ENCODE measurements at regions of chr6 and their contacts with region 1.

Region 1: GRCh38 chr6:26270903-26271667 is 93.9 kb upstream of the BTN3A2 start:
- DNase-seq: peak; percentile 86 to 88
- H3K4me3 ChIP-seq: peak overlapping the region; percentile 50
- H3K4me3 Mint-ChIP-seq: no peak overlapping the region
- H3K27ac Mint-ChIP-seq: no peak overlapping the region
- H3K4me1 ChIP-seq: peaks cover 19% of the 10 kb centered on the region
- H3K4me1 Mint-ChIP-seq: peaks cover 19% of the 10 kb centered on the region
- H3K27me3 ChIP-seq: no peaks in the 10 kb centered on the region
- H3K27me3 Mint-ChIP-seq: no peaks in the 10 kb centered on the region
- CTCF ChIP-seq: no peak

Region 2: GRCh38 chr6:26025894-26026832 is 244.9 kb before region 1 on chr6:
- CTCF ChIA-PET with region 1: no interaction called
- POLR2A ChIA-PET with region 1: interaction called, 9 read pairs
- intact Hi-C with region 1: loop called (anchors 5 kb)
- DNase-seq: peak; percentile 94 to 95
- H3K4me3 ChIP-seq: peak overlapping the region; percentile 74
- H3K4me3 Mint-ChIP-seq: peak overlapping the region; percentile 85
- H3K27ac Mint-ChIP-seq: peak overlapping the region; percentile 100
- H3K4me1 ChIP-seq: peaks cover 18% of the 10 kb centered on the region; the same call in 1 of the 2 replicates
- H3K4me1 Mint-ChIP-seq: peaks cover 35% of the 10 kb centered on the region
- H3K27me3 ChIP-seq: no peaks in the 10 kb centered on the region
- H3K27me3 Mint-ChIP-seq: peaks cover 4% of the 10 kb centered on the region
- CTCF ChIP-seq: peak; percentile 81 to 87

Region 3: DNA sequence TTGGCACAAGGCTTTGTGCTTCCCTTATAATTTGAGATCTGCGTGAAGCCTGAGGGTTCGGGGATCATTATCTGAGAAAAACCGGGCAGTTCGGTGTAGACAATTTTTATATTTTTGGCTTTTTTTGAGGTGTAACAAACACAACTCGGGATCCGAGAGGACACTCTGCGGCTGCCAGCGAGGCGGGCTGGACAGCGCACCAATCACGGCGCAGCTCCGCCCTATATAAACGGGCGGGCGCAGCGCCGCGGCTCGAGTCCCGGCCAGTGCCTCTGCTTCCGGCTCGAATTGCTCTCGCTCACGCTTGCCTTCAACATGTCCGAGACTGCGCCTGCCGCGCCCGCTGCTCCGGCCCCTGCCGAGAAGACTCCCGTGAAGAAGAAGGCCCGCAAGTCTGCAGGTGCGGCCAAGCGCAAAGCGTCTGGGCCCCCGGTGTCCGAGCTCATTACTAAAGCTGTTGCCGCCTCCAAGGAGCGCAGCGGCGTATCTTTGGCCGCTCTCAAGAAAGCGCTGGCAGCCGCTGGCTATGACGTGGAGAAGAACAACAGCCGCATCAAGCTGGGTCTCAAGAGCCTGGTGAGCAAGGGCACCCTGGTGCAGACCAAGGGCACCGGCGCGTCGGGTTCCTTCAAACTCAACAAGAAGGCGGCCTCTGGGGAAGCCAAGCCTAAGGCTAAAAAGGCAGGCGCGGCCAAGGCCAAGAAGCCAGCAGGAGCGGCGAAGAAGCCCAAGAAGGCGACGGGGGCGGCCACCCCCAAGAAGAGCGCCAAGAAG is 114.8 kb before region 1 on chr6:
- CTCF ChIA-PET with region 1: no interaction called
- POLR2A ChIA-PET with region 1: interaction called, 11 read pairs
- intact Hi-C with region 1: no loop called
- DNase-seq: peak; percentile 86 to 93
- H3K4me3 ChIP-seq: peak overlapping the region; percentile 64
- H3K4me3 Mint-ChIP-seq: peak overlapping the region; percentile 86
- H3K27ac Mint-ChIP-seq: peak overlapping the region; percentile 98
- H3K4me1 ChIP-seq: peaks cover 10% of the 10 kb centered on the region
- H3K4me1 Mint-ChIP-seq: peaks cover 45% of the 10 kb centered on the region
- H3K27me3 ChIP-seq: no peaks in the 10 kb centered on the region
- H3K27me3 Mint-ChIP-seq: peaks cover 15% of the 10 kb centered on the region
- CTCF ChIP-seq: no peak

Region 4: DNA sequence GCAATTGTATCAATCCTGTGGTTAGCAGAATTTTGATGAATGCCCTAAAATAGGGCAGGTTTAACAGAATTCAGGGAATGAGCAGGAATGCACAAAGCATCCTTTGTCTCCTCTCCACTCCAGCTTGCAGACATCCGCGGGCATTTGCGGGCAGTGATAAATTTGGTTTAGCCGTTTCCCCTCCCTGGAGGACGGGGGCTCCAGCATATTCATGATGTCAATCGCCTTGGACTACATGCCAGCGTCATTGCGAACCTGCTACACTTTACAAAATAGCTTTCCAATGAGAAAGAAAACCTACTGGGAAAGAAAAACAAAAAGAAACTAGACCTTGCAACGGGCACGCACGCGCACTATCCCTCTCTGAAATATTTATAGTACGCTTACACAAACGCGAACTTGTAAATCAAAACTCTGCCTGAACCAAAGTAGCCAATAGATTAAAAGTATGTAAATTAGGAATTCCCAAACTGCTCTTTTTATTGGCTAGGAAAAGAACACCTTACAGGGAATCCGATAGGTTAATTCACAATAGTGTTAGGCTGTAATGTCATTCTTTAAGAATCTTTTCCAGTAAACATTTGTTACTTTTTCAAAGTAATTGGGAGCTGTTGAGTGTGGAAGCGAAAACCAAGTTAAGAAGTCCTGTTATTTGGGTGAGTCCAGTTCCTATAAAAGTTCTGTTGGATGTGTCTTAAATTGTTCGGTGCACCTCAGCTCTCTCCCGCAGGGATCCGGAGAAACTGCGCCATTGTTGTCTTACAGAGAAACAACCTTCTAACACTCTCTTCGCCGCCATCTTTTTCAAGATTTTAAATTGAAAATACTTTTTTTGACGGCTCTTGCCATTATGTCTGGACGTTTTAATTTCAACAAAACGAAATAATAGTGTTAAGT is 47.2 kb before region 1 on chr6:
- CTCF ChIA-PET with region 1: no interaction called
- POLR2A ChIA-PET with region 1: interaction called, 17 read pairs
- intact Hi-C with region 1: no loop called
- DNase-seq: peak; percentile 63 to 69
- H3K4me3 ChIP-seq: peak overlapping the region; percentile 55
- H3K4me3 Mint-ChIP-seq: no peak overlapping the region
- H3K27ac Mint-ChIP-seq: no peak overlapping the region
- H3K4me1 ChIP-seq: 0 out of 2 replicates have a peak, but pooled peaks cover 8% of the 10 kb centered on the region
- H3K4me1 Mint-ChIP-seq: no peaks in the 10 kb centered on the region
- H3K27me3 ChIP-seq: no peaks in the 10 kb centered on the region
- H3K27me3 Mint-ChIP-seq: no peaks in the 10 kb centered on the region
- CTCF ChIP-seq: no peak

Region 5: GRCh38 chr6:26249957-26250697 is 21.0 kb before region 1 on chr6:
- CTCF ChIA-PET with region 1: interaction called, 7 read pairs
- POLR2A ChIA-PET with region 1: interaction called, 166 read pairs
- intact Hi-C with region 1: loop called (anchors 1 kb)
- DNase-seq: peak; percentile 81 to 84
- H3K4me3 ChIP-seq: peak overlapping the region; percentile 97
- H3K4me3 Mint-ChIP-seq: peak overlapping the region; percentile 71
- H3K27ac Mint-ChIP-seq: peak overlapping the region; percentile 71
- H3K4me1 ChIP-seq: peaks cover 10% of the 10 kb centered on the region; the same call in 1 of the 2 replicates
- H3K4me1 Mint-ChIP-seq: peaks cover 13% of the 10 kb centered on the region
- H3K27me3 ChIP-seq: no peaks in the 10 kb centered on the region
- H3K27me3 Mint-ChIP-seq: peaks cover 3% of the 10 kb centered on the region
- CTCF ChIP-seq: peak in 1 of 2 experiments; percentile 42

Region 6: DNA sequence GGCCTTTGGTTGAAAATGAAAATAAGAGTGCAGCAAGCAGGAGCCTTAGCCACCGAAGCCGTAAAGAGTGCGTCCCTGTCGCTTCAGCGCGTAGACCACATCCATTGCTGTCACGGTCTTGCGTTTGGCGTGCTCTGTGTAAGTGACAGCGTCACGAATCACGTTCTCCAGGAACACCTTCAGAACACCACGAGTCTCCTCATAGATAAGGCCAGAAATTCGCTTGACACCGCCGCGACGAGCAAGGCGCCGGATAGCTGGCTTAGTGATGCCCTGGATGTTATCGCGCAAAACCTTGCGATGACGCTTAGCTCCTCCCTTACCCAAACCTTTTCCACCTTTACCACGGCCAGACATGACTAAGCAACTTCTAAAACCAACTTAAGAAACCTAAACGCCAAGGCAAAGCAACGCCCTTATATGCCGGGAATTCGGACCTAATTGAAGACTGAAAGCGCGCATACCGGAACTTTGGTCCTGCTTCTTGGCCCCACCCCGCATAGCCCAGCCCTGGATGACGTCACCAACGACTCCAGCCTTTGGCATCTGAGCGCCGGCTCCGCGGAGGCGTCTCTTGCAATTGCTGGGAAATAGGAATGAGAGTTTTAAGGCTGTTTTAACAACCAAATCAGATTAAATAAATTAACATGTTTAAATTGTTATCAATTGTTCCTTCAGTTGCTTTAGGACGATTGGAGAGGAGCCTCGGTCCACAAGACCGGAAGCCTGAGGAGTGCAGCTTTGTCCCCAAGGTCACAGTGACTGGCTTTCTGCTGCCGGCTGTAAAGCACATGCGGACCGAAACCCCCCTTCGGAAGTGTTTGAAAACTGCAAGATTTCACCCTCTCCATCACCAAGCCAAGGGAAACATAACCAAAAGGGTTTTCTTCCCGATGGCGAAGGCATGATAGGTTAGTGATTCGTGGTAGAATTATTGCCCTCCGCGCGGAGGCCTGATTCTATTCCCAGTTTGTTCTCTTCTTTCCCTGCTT is 14.4 kb after region 1 on chr6:
- CTCF ChIA-PET with region 1: no interaction called
- POLR2A ChIA-PET with region 1: interaction called, 69 read pairs
- intact Hi-C with region 1: loop called (anchors 1 kb)
- DNase-seq: peak; percentile 97 to 99
- H3K4me3 ChIP-seq: peak overlapping the region; percentile 55
- H3K4me3 Mint-ChIP-seq: peak overlapping the region; percentile 82
- H3K27ac Mint-ChIP-seq: peak overlapping the region; percentile 100
- H3K4me1 ChIP-seq: no peaks in the 10 kb centered on the region
- H3K4me1 Mint-ChIP-seq: peaks cover 17% of the 10 kb centered on the region
- H3K27me3 ChIP-seq: no peaks in the 10 kb centered on the region
- H3K27me3 Mint-ChIP-seq: peaks cover 6% of the 10 kb centered on the region
- CTCF ChIP-seq: no peak

Region 7: GRCh38 chr6:26327450-26328264 is 56.6 kb after region 1 on chr6:
- CTCF ChIA-PET with region 1: no interaction called
- POLR2A ChIA-PET with region 1: no interaction called
- intact Hi-C with region 1: no loop called
- DNase-seq: peak; percentile 68 to 70
- H3K4me3 ChIP-seq: peak overlapping the region; percentile 23
- H3K4me3 Mint-ChIP-seq: peak overlapping the region; percentile 54
- H3K27ac Mint-ChIP-seq: no peak overlapping the region
- H3K4me1 ChIP-seq: peaks cover 6% of the 10 kb centered on the region; the same call in 1 of the 2 replicates
- H3K4me1 Mint-ChIP-seq: peaks cover 24% of the 10 kb centered on the region
- H3K27me3 ChIP-seq: no peaks in the 10 kb centered on the region
- H3K27me3 Mint-ChIP-seq: peaks cover 2% of the 10 kb centered on the region
- CTCF ChIP-seq: no peak

Region 8: GRCh38 chr6:27838058-27838944 is 1567.2 kb after region 1 on chr6:
- CTCF ChIA-PET with region 1: no interaction called
- POLR2A ChIA-PET with region 1: interaction called, 3 read pairs
- intact Hi-C with region 1: loop called (anchors 10 kb)
- DNase-seq: peak; percentile 91 to 92
- H3K4me3 ChIP-seq: peak overlapping the region; percentile 77
- H3K4me3 Mint-ChIP-seq: no peak overlapping the region
- H3K27ac Mint-ChIP-seq: no peak overlapping the region
- H3K4me1 ChIP-seq: peaks cover 14% of the 10 kb centered on the region; the same call in 1 of the 2 replicates
- H3K4me1 Mint-ChIP-seq: peaks cover 21% of the 10 kb centered on the region
- H3K27me3 ChIP-seq: no peaks in the 10 kb centered on the region
- H3K27me3 Mint-ChIP-seq: no peaks in the 10 kb centered on the region
- CTCF ChIP-seq: no peak